ENCODE measurements at regions of chr14 and their contacts with region 1.

Region 1: DNA sequence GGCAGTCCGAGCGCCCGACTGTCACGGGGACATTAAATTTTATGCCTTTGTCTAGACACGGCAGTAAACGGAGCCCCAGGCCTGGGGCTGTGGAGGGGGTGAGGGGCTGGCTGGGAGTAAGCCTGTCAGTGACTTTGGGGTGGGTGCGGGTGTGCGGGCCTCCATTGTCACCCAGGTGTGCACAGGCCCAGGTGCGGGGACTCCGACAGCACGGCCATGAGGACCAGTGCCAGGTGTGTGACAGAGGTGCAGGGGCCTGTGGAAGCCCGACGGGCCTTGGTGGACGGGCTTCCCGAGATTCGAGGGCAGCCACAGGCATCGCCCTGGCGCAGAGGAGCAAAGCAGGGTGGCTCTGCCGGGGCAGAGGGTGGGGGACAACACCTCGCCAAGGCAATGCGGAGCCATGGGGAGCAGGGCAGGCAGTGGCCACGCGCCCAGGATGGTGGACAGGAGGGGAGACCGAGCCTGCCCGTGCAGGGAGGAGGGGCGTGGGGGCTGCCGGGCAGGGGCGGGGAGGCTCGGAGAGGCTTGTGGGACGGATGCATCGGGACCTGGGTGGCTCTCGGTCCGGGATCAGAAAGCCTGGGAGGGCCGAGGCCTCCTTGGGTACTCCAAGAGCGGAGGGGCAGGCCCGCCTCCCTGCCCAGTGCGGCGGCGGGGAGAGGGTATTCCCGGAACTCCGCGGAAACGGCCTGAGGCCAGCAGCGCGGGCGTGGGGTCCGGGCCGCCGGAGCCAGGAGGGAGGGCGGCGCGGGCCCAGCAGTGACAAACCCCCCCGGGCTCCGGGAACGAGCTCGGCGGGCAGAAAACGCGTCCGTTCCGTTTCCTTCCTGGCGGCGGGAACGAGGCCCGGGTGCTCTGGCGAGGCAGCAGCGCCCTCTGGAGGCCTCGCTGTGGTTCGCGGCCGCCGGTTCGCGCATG is 1.5 kb downstream of the TMEM121 start:
- DNase-seq: peak; percentile 66 to 89 (median 79)
- ATAC-seq: peak; percentile 69
- H3K4me3 ChIP-seq: peak overlapping the region; percentile 38 to 66
- H3K4me3 Mint-ChIP-seq: peak overlapping the region; percentile 75
- H3K27ac ChIP-seq: no peak overlapping the region
- H3K27ac Mint-ChIP-seq: no peak overlapping the region
- H3K4me1 ChIP-seq: peaks cover 32% of the 10 kb centered on the region
- H3K4me1 Mint-ChIP-seq: peaks cover 18% of the 10 kb centered on the region
- H3K27me3 ChIP-seq: peaks cover 4 to 24% of the 10 kb centered on the region in 2 experiments
- H3K27me3 Mint-ChIP-seq: peaks cover 7% of the 10 kb centered on the region
- CTCF ChIP-seq: peak; percentile 73

Region 2: GRCh38 chr14:105448706-105449111 is 79.2 kb before region 1 on chr14:
- CTCF ChIA-PET with region 1: no interaction called
- POLR2A ChIA-PET with region 1: no interaction called
- intact Hi-C with region 1: loop called in 1 of 2 experiments (anchors 1 kb)
- DNase-seq: peak; percentile 49 to 77 (median 72)
- ATAC-seq: peak; percentile 99
- H3K4me3 ChIP-seq: no peak overlapping the region
- H3K4me3 Mint-ChIP-seq: no peak overlapping the region
- H3K27ac ChIP-seq: no peak overlapping the region
- H3K27ac Mint-ChIP-seq: no peak overlapping the region
- H3K4me1 ChIP-seq: no peaks in the 10 kb centered on the region
- H3K4me1 Mint-ChIP-seq: no peaks in the 10 kb centered on the region
- H3K27me3 ChIP-seq: no peaks in the 10 kb centered on the region
- H3K27me3 Mint-ChIP-seq: no peaks in the 10 kb centered on the region
- CTCF ChIP-seq: peak; percentile 76

Measured in CD8-positive, alpha-beta T cell (primary cell).